ENCODE measurements at regions of chr9 and their contacts with region 1.

Region 1: DNA sequence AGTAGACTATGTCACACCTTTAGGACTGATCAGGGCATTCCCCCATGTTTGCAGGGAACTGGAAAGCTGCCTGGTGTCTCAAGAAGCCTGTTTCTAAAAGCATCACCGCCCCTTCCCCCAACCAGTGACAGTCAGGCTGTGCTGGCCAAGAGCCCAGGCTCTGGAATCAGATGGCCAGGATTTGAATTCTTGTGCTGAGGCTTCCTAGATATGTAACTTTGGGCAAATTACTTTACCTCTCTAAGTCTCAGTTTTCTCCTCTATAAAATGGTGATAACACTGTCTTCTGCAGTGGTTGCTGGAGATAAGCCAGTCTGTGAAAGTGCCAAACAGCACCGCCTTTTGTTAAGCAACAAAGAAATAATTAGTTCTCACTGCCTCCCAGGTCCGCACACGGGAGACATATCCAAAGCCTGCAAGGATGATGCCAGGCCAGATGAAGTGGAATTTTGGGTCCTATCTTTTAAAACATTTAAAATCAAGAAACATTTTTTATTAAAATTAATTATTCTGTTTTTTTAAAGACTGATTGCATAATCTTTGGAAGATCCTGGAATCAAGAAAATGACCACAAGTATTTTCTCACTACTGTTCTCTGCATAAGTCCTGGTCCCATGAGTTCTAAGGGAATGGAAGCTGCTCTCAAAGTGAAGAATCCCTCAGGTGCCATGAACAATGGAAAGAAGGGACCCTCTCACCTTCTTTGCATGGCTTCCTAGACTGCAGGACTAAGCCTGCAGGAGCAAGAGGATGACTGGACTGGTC is 13.9 kb downstream of the SLC31A2 start:
- DNase-seq: no peak
- ATAC-seq: no peak
- H3K4me3 ChIP-seq: no peak overlapping the region
- H3K4me3 Mint-ChIP-seq: no peak overlapping the region
- H3K27ac ChIP-seq: no peak overlapping the region
- H3K27ac Mint-ChIP-seq: peak overlapping the region in 1 of 9 donors; percentile 12
- H3K4me1 ChIP-seq: no peaks in the 10 kb centered on the region
- H3K4me1 Mint-ChIP-seq: no peaks in the 10 kb centered on the region
- H3K27me3 ChIP-seq: no peaks in the 10 kb centered on the region
- H3K27me3 Mint-ChIP-seq: no peaks in the 10 kb centered on the region

Region 2: GRCh38 chr9:113018247-113018646 is 146.5 kb before region 1 on chr9:
- CTCF ChIA-PET with region 1: no interaction called
- POLR2A ChIA-PET with region 1: no interaction called
- intact Hi-C with region 1: no loop called
- DNase-seq: no peak
- ATAC-seq: no peak
- H3K4me3 ChIP-seq: no peak overlapping the region
- H3K4me3 Mint-ChIP-seq: no peak overlapping the region
- H3K27ac ChIP-seq: no peak overlapping the region
- H3K27ac Mint-ChIP-seq: no peak overlapping the region
- H3K4me1 ChIP-seq: no peaks in the 10 kb centered on the region
- H3K4me1 Mint-ChIP-seq: no peaks in the 10 kb centered on the region
- H3K27me3 ChIP-seq: no peaks in the 10 kb centered on the region
- H3K27me3 Mint-ChIP-seq: peaks cover 0 to 21% (median 17%) of the 10 kb centered on the region in 5 donors

Region 3: DNA sequence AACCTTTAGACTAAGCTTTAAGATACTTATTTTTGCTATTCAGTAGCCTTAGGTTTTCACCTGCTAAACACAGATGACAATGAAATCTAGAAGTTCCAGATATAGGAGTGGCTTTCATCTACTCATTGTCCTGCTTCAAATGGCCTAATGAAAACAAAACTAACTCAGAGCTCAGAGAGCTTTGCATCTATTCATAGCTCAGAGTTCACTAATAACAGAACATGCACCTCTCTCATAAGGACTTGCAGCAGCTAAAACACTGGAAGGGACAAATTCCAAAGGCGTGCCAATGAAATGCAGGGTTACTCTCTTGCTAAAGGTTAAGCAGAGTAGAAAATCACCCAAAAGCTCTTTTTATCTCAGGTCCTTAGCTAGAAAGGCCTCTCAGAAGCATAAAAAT is 15.1 kb after region 1 on chr9:
- CTCF ChIA-PET with region 1: interaction called, 3 read pairs
- POLR2A ChIA-PET with region 1: no interaction called
- intact Hi-C with region 1: loop called in 1 of 2 experiments (anchors 1 kb)
- DNase-seq: no peak
- ATAC-seq: no peak
- H3K4me3 ChIP-seq: no peak overlapping the region
- H3K4me3 Mint-ChIP-seq: no peak overlapping the region
- H3K27ac ChIP-seq: no peak overlapping the region
- H3K27ac Mint-ChIP-seq: no peak overlapping the region
- H3K4me1 ChIP-seq: no peaks in the 10 kb centered on the region
- H3K4me1 Mint-ChIP-seq: no peaks in the 10 kb centered on the region
- H3K27me3 ChIP-seq: no peaks in the 10 kb centered on the region
- H3K27me3 Mint-ChIP-seq: no peaks in the 10 kb centered on the region

Measured in naive thymus-derived CD4-positive, alpha-beta T cell (primary cell).